CD4-positive, alpha-beta T cell (primary cell): ENCODE measurements at regions of chr11 and their contacts with region 1.

Region 1: DNA sequence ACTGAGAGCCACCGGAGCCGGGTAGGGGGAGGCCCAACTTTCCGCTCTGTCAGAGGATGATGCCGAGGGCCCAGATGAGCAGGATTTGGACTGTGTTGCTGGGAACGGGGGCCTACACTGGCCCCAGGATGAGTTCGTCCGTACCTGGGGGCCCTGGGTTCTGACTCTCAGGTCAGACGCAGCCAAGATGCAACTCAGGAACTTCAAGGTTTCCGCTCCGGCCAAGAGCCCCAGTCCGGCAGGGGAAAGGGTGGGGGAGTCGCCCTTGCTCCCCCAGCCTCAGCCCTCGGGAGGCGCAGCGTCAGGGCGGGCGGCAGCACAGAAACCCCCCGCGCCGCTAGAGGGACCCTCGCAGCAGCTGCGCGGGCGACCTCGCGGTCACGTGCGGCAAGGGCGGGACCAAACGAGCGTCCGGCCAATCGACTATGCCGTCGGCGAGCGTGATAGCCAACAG is 241 bp upstream of the ARL2 start:
- DNase-seq: peak; percentile 66 to 95 (median 82)
- ATAC-seq: peak; percentile 94
- H3K4me3 ChIP-seq: peak overlapping the region; percentile 87
- H3K4me3 Mint-ChIP-seq: peak overlapping the region; percentile 97
- H3K27ac ChIP-seq: peak overlapping the region; percentile 83 to 98
- H3K27ac Mint-ChIP-seq: peak overlapping the region; percentile 96
- H3K4me1 ChIP-seq: peaks cover 26% of the 10 kb centered on the region
- H3K4me1 Mint-ChIP-seq: peaks cover 26% of the 10 kb centered on the region
- H3K27me3 ChIP-seq: no peaks in the 10 kb centered on the region
- H3K27me3 Mint-ChIP-seq: no peaks in the 10 kb centered on the region
- CTCF ChIP-seq: peak; percentile 74

Region 2: GRCh38 chr11:64971421-64972233 is 42.1 kb before region 1 on chr11 and contains the start of gene MAJIN:
- CTCF ChIA-PET with region 1: interaction called, 3 read pairs
- POLR2A ChIA-PET with region 1: interaction called, 4 read pairs
- intact Hi-C with region 1: loop called in 1 of 2 experiments (anchors 5 kb)
- DNase-seq: peak; percentile 76 to 95 (median 90)
- ATAC-seq: peak; percentile 82
- H3K4me3 ChIP-seq: peak within 1 kb of the TSS; percentile 58
- H3K4me3 Mint-ChIP-seq: peak within 1 kb of the TSS; percentile 81
- H3K27ac ChIP-seq: peak within 1 kb of the TSS in 1 of 2 donors; percentile 29
- H3K27ac Mint-ChIP-seq: peak within 1 kb of the TSS; percentile 83
- H3K4me1 ChIP-seq: peaks cover 23% of the 10 kb centered on the region
- H3K4me1 Mint-ChIP-seq: peaks cover 26% of the 10 kb centered on the region
- H3K27me3 ChIP-seq: no peaks in the 10 kb centered on the region
- H3K27me3 Mint-ChIP-seq: no peaks in the 10 kb centered on the region
- CTCF ChIP-seq: no peak
- total RNA-seq, gene MAJIN: 0.50 to 0.55 TPM

Region 3: GRCh38 chr11:65040847-65041621 is 27.3 kb after region 1 on chr11 and contains the start of gene SAC3D1:
- CTCF ChIA-PET with region 1: interaction called, 20 read pairs
- POLR2A ChIA-PET with region 1: interaction called, 18 read pairs
- intact Hi-C with region 1: loop called in 1 of 2 experiments (anchors 2 kb)
- DNase-seq: peak; percentile 70 to 95 (median 80)
- ATAC-seq: peak; percentile 87
- H3K4me3 ChIP-seq: peak within 1 kb of the TSS; percentile 82
- H3K4me3 Mint-ChIP-seq: peak within 1 kb of the TSS; percentile 98
- H3K27ac ChIP-seq: peak within 1 kb of the TSS; percentile 56 to 84
- H3K27ac Mint-ChIP-seq: peak within 1 kb of the TSS; percentile 93
- H3K4me1 ChIP-seq: peaks cover 32% of the 10 kb centered on the region
- H3K4me1 Mint-ChIP-seq: peaks cover 20% of the 10 kb centered on the region
- H3K27me3 ChIP-seq: no peaks in the 10 kb centered on the region
- H3K27me3 Mint-ChIP-seq: no peaks in the 10 kb centered on the region
- CTCF ChIP-seq: no peak
- total RNA-seq, gene SAC3D1: 0.49 to 0.78 TPM

Region 4: DNA sequence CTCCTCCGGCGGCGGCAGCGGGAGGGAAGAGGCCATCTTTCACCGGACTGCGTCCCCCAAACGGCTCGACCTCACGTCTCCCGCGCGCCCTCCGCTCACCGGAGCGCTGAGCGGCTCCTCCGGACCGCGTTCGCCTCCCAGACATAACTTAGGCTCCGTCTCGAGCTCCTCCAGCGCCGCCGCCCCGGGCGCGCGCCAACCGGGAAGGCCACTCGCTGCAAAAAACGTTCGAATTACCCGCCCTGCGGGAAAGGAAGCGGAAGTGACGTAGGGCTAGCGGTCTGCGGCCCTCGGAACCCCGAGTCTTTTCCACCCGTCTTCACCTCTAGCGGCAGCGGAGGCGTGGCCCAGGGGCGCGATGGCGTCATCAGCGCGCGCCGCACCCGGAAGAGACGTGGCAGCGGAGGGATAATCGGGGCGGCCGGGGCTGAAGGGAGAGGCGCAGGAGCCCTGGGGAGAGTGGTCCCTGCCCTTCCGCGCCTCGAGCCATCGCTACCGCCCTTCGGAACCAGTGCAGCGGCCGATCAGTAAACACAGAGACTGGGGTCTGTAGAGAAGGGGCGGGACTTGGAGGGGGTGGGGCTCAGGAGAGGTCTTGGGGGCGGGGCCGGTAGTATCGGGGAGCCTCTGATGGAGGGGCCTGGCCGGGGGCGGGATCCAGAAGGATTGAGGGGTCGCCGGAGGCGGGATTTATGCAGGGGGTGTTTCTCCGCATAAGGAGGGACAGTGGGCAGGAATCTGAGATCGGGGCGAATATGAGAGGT is 70.3 kb after region 1 on chr11 and contains the starts of genes CDCA5 and ZFPL1:
- CTCF ChIA-PET with region 1: interaction called, 5 read pairs
- POLR2A ChIA-PET with region 1: no interaction called
- intact Hi-C with region 1: loop called in 1 of 2 experiments (anchors 2 kb)
- DNase-seq: peak; percentile 92 to 98 (median 95)
- ATAC-seq: peak; percentile 87
- H3K4me3 ChIP-seq: peak within 1 kb of the TSS; percentile 80
- H3K4me3 Mint-ChIP-seq: peak within 1 kb of the TSS; percentile 98
- H3K27ac ChIP-seq: peak within 1 kb of the TSS; percentile 86 to 97
- H3K27ac Mint-ChIP-seq: peak within 1 kb of the TSS; percentile 97
- H3K4me1 ChIP-seq: peaks cover 21% of the 10 kb centered on the region
- H3K4me1 Mint-ChIP-seq: peaks cover 33% of the 10 kb centered on the region
- H3K27me3 ChIP-seq: no peaks in the 10 kb centered on the region
- H3K27me3 Mint-ChIP-seq: no peaks in the 10 kb centered on the region
- CTCF ChIP-seq: no peak
- total RNA-seq, gene CDCA5: 0.77 to 0.84 TPM
- total RNA-seq, gene ZFPL1: 46.2 to 47.7 TPM

Region 5: GRCh38 chr11:65180877-65181568 is 167.3 kb after region 1 on chr11:
- CTCF ChIA-PET with region 1: no interaction called
- POLR2A ChIA-PET with region 1: interaction called, 3 read pairs
- intact Hi-C with region 1: loop called in 1 of 2 experiments (anchors 5 kb)
- DNase-seq: peak; percentile 22 to 80 (median 45)
- ATAC-seq: peak; percentile 67
- H3K4me3 ChIP-seq: peak overlapping the region; percentile 97
- H3K4me3 Mint-ChIP-seq: peak overlapping the region; percentile 94
- H3K27ac ChIP-seq: no peak overlapping the region
- H3K27ac Mint-ChIP-seq: peak overlapping the region; percentile 83
- H3K4me1 ChIP-seq: peaks cover 37% of the 10 kb centered on the region
- H3K4me1 Mint-ChIP-seq: peaks cover 12% of the 10 kb centered on the region
- H3K27me3 ChIP-seq: no peaks in the 10 kb centered on the region
- H3K27me3 Mint-ChIP-seq: no peaks in the 10 kb centered on the region
- CTCF ChIP-seq: peak; percentile 65